Dorsolateral prefrontal cortex (tissue), 120 donors: ENCODE measurements at regions of chr9 and their contacts with region 1.

Region 1: GRCh38 chr9:114291064-114291474 is 31.8 kb upstream of the ORM1 start:
- DNase-seq: peak; percentile 65 to 84 (median 80)
- H3K4me3 ChIP-seq: no peak overlapping the region
- H3K27ac ChIP-seq: no peak overlapping the region
- H3K27me3 ChIP-seq: no peaks in the 10 kb centered on the region
- CTCF ChIP-seq: peak; percentile 86 to 99 (median 97)

Region 2: GRCh38 chr9:114082017-114082762 is 208.9 kb before region 1 on chr9:
- intact Hi-C with region 1: loop called (anchors 1 to 5 kb)
- DNase-seq: peak; percentile 81 to 97 (median 90)
- H3K4me3 ChIP-seq: no peak overlapping the region
- H3K27ac ChIP-seq: no peak overlapping the region
- H3K27me3 ChIP-seq: peaks cover 0 to 21% (median under 1%) of the 10 kb centered on the region in 45 donors
- CTCF ChIP-seq: peak; percentile 81 to 99 (median 95)